Activated T-helper 1 cell treated with anti-CD3 and anti-CD28 coated beads, Interleukin-12 subunit alpha, Interleukin-12 subunit beta, Interleukin-2, Interleukin-4 antibody, amounts not matched to agents 30 ng/mL and 10 ng/mL and 1 ng/mL, durations not matched to agents 14 hours and 24 hours and 36 hours (primary cell): ENCODE measurements at regions of chr19 and their contacts with region 1.

Region 1: DNA sequence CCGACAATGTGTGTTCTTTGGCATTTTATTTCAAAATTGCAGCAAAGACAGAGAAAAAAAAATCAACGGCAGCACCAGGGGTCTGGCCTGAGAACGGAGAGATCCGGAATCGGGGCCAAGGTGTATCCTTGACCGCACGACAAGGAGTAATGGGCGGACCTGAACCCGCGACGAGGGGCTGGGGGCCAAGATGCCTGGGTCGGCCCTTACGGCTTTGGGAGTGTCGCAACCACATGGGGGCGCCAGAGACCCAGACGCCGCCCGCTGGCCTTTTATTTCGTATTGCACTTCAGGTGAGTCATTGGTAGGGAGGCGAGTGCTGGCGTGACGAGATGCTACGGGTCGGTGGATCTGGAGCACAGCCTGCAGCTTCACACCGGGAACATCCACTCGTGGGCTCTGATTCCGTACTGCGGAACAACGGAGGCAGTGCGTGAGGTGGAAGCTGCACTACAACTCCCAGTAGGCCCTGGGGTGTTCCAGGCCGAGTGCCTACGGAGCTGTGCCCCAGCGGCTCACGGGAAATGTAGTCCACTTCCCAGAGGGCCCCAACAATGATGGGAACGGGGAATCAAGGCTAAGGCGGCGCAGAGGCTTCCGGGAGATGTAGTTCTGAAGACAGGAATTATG is 15.7 kb downstream of the BCAT2 start:
- DNase-seq: peak; percentile 79
- H3K4me3 Mint-ChIP-seq: peak overlapping the region; percentile 89
- H3K27ac Mint-ChIP-seq: peak overlapping the region; percentile 87
- H3K4me1 Mint-ChIP-seq: peaks cover 7% of the 10 kb centered on the region
- H3K27me3 Mint-ChIP-seq: no peaks in the 10 kb centered on the region

Region 2: GRCh38 chr19:48624067-48624594 is 171.0 kb before region 1 on chr19:
- intact Hi-C with region 1: no loop called
- DNase-seq: peak; percentile 97
- H3K4me3 Mint-ChIP-seq: peak overlapping the region; percentile 83
- H3K27ac Mint-ChIP-seq: peak overlapping the region; percentile 94
- H3K4me1 Mint-ChIP-seq: peaks cover 39% of the 10 kb centered on the region
- H3K27me3 Mint-ChIP-seq: no peaks in the 10 kb centered on the region

Region 3: GRCh38 chr19:48720613-48721296 is 74.4 kb before region 1 on chr19:
- intact Hi-C with region 1: loop called (anchors 1 kb)
- DNase-seq: peak; percentile 91
- H3K4me3 Mint-ChIP-seq: peak overlapping the region; percentile 92
- H3K27ac Mint-ChIP-seq: peak overlapping the region; percentile 98
- H3K4me1 Mint-ChIP-seq: peaks cover 23% of the 10 kb centered on the region
- H3K27me3 Mint-ChIP-seq: no peaks in the 10 kb centered on the region

Region 4: GRCh38 chr19:48734625-48735555 is 60.3 kb before region 1 on chr19:
- intact Hi-C with region 1: no loop called
- DNase-seq: no peak
- H3K4me3 Mint-ChIP-seq: no peak overlapping the region
- H3K27ac Mint-ChIP-seq: no peak overlapping the region
- H3K4me1 Mint-ChIP-seq: peaks cover 5% of the 10 kb centered on the region
- H3K27me3 Mint-ChIP-seq: peaks cover 2% of the 10 kb centered on the region

Region 5: GRCh38 chr19:48746738-48747575 is 48.2 kb before region 1 on chr19 and contains the start of gene IZUMO1:
- intact Hi-C with region 1: loop called (anchors 2 kb)
- DNase-seq: peak; percentile 62
- H3K4me3 Mint-ChIP-seq: peak within 1 kb of the TSS; percentile 63
- H3K27ac Mint-ChIP-seq: peak within 1 kb of the TSS; percentile 12
- H3K4me1 Mint-ChIP-seq: peaks cover 17% of the 10 kb centered on the region
- H3K27me3 Mint-ChIP-seq: peaks cover 4% of the 10 kb centered on the region
- total RNA-seq, gene IZUMO1: 0.37 TPM in 1 of 2 replicates, not detected in the other

Region 6: DNA sequence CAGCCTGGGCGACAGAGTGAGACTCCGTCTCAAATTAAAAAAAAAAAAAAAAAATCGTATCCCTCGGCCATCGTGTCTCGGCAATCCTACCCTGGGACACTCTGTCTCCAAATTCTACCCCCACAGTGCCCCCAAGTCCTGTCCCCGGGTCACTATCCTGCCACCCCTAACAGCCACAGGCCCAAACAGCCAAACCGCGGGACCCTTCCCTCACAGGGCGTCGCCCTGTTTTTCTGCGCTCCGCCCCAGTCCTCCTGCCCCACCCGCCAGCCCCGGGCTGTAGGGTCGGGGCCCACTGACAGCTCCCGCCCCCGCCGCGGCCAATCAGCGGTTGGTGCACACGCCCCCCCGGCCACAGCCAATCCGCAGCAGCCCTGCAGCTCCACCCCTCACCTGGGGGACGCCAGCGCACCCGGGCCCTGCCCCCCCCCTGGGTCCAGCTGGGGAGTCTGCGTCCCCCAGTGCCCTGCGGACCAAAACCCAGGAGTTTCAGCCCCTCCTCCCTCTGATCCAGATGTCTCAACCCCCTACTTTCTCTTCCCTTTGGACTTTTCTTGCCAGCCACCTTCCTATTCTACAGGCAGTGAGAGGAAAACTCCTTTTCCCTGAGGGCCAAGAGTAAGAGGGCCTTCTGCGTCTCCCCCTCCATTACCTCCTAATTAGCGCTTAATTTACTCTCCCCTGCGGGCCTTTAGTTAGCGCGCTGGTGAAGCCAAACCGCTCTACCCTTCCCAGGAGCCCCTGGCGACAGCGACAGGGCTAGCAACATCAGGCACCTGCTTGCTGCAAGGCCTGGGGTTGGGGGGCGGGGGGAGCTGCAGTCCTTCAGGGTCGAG is 17.1 kb after region 1 on chr19:
- intact Hi-C with region 1: loop called (anchors 1 kb)
- DNase-seq: peak; percentile 58
- H3K4me3 Mint-ChIP-seq: peak overlapping the region; percentile 76
- H3K27ac Mint-ChIP-seq: no peak overlapping the region
- H3K4me1 Mint-ChIP-seq: peaks cover 33% of the 10 kb centered on the region
- H3K27me3 Mint-ChIP-seq: peaks cover 2% of the 10 kb centered on the region

Region 7: GRCh38 chr19:48835734-48836088 is 40.5 kb after region 1 on chr19:
- intact Hi-C with region 1: loop called (anchors 1 kb)
- DNase-seq: peak; percentile 87
- H3K4me3 Mint-ChIP-seq: peak overlapping the region; percentile 84
- H3K27ac Mint-ChIP-seq: peak overlapping the region; percentile 87
- H3K4me1 Mint-ChIP-seq: peaks cover 23% of the 10 kb centered on the region
- H3K27me3 Mint-ChIP-seq: peaks cover 7% of the 10 kb centered on the region

Region 8: DNA sequence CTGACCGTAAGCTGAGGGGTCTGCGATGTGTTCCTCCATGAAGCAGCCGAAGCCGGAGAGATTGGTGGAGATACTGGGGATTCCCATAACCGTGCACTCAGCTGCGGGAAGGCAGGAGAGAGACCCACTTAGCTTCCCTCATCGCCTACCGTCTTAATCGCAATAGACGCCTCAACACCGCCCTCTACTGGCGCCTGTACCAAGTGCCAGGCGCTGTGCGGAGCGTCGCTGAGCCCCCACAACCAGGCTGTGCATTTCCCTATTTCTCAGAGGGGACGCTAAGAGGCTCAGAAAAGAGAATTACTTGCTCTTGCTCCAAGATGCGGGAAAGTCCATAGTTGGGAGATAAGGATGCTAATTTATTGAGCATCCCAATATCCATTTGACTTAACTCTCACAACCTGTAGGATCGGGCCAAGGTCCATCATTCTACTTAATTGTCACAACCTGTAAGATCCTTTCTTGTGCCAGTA is 175.8 kb after region 1 on chr19:
- intact Hi-C with region 1: loop called (anchors 1 kb)
- DNase-seq: peak; percentile 72
- H3K4me3 Mint-ChIP-seq: no peak overlapping the region
- H3K27ac Mint-ChIP-seq: peak overlapping the region; percentile 41
- H3K4me1 Mint-ChIP-seq: peaks cover 25% of the 10 kb centered on the region
- H3K27me3 Mint-ChIP-seq: no peaks in the 10 kb centered on the region